ENCODE measurements at regions of chr2 and their contacts with region 1.

Region 1: GRCh38 chr2:134790487-134790886 is 47.9 kb upstream of the ACMSD start:
- DNase-seq: no peak
- H3K4me3 ChIP-seq: no peak overlapping the region
- H3K27me3 ChIP-seq: no peaks in the 10 kb centered on the region
- CTCF ChIP-seq: no peak

Region 2: GRCh38 chr2:134375935-134376334 is 414.6 kb before region 1 on chr2:
- CTCF ChIA-PET with region 1: no interaction called
- POLR2A ChIA-PET with region 1: no interaction called
- DNase-seq: no peak
- H3K4me3 ChIP-seq: no peak overlapping the region
- H3K27me3 ChIP-seq: no peaks in the 10 kb centered on the region
- CTCF ChIP-seq: peak; percentile 31; the same call in 1 of the 2 replicates

Region 3: DNA sequence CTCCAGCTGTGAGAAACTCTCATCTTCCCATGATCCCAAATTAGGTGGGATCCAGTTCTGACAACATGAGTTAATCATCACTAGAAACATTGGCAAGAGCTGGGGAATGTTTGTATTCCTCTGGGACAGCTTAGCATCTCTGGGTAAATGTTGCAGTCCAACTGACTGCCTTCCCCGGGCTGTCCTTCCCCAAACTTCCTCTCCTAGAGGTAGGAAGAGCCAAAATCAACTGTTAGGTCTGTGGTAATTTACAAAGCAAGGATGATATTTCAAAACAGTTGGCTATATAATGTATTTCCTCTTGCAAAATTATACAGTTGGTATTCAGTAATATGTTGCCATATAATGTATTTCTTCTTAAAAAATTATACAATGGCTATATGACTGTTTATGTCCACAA is 388.1 kb before region 1 on chr2:
- CTCF ChIA-PET with region 1: no interaction called
- POLR2A ChIA-PET with region 1: no interaction called
- DNase-seq: no peak
- H3K4me3 ChIP-seq: no peak overlapping the region
- H3K27me3 ChIP-seq: no peaks in the 10 kb centered on the region
- CTCF ChIP-seq: no peak

Region 4: DNA sequence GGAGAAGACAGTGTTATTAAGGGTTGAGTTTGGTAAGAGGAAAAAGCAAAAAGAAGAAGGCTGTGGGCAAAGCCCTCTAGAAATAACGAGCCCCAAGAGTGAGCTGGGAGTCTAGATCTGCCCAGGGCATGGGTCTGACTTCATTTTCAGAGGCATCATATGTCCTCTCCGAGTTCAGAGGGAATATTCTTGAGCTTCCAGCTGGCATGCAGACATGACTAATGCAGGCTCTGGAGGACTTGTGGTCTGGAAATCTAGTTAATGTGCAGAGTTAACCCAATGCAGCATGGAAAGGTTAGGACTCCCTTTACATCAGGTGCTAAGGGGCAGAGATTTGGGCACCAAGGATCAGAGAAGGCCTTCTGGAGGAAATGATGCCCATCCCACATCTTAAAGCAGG is 55.2 kb after region 1 on chr2:
- CTCF ChIA-PET with region 1: no interaction called
- POLR2A ChIA-PET with region 1: interaction called, 30 read pairs
- DNase-seq: no peak
- H3K4me3 ChIP-seq: no peak overlapping the region
- H3K27me3 ChIP-seq: 0 out of 2 replicates have a peak, but pooled peaks cover 2% of the 10 kb centered on the region
- CTCF ChIP-seq: no peak

Measured in BJ (cell line).